Naive thymus-derived CD4-positive, alpha-beta T cell (primary cell): ENCODE measurements at regions of chr6 and their contacts with region 1.

Region 1: GRCh38 chr6:142112451-142113061 is 20.2 kb upstream of the GJE1 start:
- DNase-seq: peak; percentile 10 to 45 (median 37)
- ATAC-seq: peak; percentile 61
- H3K4me3 ChIP-seq: no peak overlapping the region
- H3K4me3 Mint-ChIP-seq: no peak overlapping the region
- H3K27ac ChIP-seq: no peak overlapping the region
- H3K27ac Mint-ChIP-seq: no peak overlapping the region
- H3K4me1 ChIP-seq: no peaks in the 10 kb centered on the region
- H3K4me1 Mint-ChIP-seq: no peaks in the 10 kb centered on the region
- H3K27me3 ChIP-seq: no peaks in the 10 kb centered on the region
- H3K27me3 Mint-ChIP-seq: peaks cover 0 to 11% (median 6%) of the 10 kb centered on the region in 5 donors

Region 2: GRCh38 chr6:141309295-141309694 is 803.3 kb before region 1 on chr6:
- CTCF ChIA-PET with region 1: no interaction called
- POLR2A ChIA-PET with region 1: no interaction called
- intact Hi-C with region 1: loop called in 1 of 2 experiments (anchors 1 kb)
- DNase-seq: peak in 2 of 9 donors; percentile 4 to 15
- ATAC-seq: peak; percentile 62
- H3K4me3 ChIP-seq: no peak overlapping the region
- H3K4me3 Mint-ChIP-seq: no peak overlapping the region
- H3K27ac ChIP-seq: no peak overlapping the region
- H3K27ac Mint-ChIP-seq: no peak overlapping the region
- H3K4me1 ChIP-seq: no peaks in the 10 kb centered on the region
- H3K4me1 Mint-ChIP-seq: no peaks in the 10 kb centered on the region
- H3K27me3 ChIP-seq: no peaks in the 10 kb centered on the region
- H3K27me3 Mint-ChIP-seq: peaks cover 0 to 7% (median 0%) of the 10 kb centered on the region in 5 donors

Region 3: DNA sequence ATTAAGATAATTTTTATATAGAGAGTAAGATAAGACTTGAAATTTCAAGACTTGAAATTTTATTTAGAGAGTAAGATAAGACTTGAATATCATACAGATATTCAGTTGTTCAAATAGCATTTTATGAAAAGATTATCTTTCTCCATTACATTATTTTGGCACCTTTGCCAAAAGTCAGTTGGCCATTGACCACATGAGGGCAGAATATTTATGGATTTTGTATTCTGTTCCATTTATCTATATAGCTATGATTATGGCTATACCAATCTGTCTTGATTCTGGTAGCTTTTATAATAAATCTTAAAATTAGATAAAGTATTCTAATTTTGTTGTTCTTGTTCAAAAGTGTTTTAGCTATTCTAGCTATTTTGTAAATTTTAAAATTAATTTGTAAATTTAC is 517.7 kb before region 1 on chr6:
- CTCF ChIA-PET with region 1: no interaction called
- POLR2A ChIA-PET with region 1: no interaction called
- intact Hi-C with region 1: loop called in 1 of 2 experiments (anchors 1 kb)
- DNase-seq: no peak
- ATAC-seq: no peak
- H3K4me3 ChIP-seq: no peak overlapping the region
- H3K4me3 Mint-ChIP-seq: no peak overlapping the region
- H3K27ac ChIP-seq: no peak overlapping the region
- H3K27ac Mint-ChIP-seq: no peak overlapping the region
- H3K4me1 ChIP-seq: no peaks in the 10 kb centered on the region
- H3K4me1 Mint-ChIP-seq: no peaks in the 10 kb centered on the region
- H3K27me3 ChIP-seq: no peaks in the 10 kb centered on the region
- H3K27me3 Mint-ChIP-seq: peaks cover 0 to 18% (median 0%) of the 10 kb centered on the region in 5 donors

Region 4: GRCh38 chr6:141641406-141641805 is 471.1 kb before region 1 on chr6:
- CTCF ChIA-PET with region 1: no interaction called
- POLR2A ChIA-PET with region 1: no interaction called
- intact Hi-C with region 1: loop called in 1 of 2 experiments (anchors 1 kb)
- DNase-seq: no peak
- ATAC-seq: no peak
- H3K4me3 ChIP-seq: no peak overlapping the region
- H3K4me3 Mint-ChIP-seq: no peak overlapping the region
- H3K27ac ChIP-seq: no peak overlapping the region
- H3K27ac Mint-ChIP-seq: no peak overlapping the region
- H3K4me1 ChIP-seq: no peaks in the 10 kb centered on the region
- H3K4me1 Mint-ChIP-seq: no peaks in the 10 kb centered on the region
- H3K27me3 ChIP-seq: no peaks in the 10 kb centered on the region
- H3K27me3 Mint-ChIP-seq: peaks cover 0 to 4% (median 0%) of the 10 kb centered on the region in 5 donors

Region 5: GRCh38 chr6:141677598-141678211 is 434.9 kb before region 1 on chr6:
- CTCF ChIA-PET with region 1: interaction called, 3 read pairs
- POLR2A ChIA-PET with region 1: no interaction called
- intact Hi-C with region 1: loop called in 1 of 2 experiments (anchors 1 kb)
- DNase-seq: peak in 3 of 9 donors; percentile 1 to 8 (median 2)
- ATAC-seq: no peak
- H3K4me3 ChIP-seq: no peak overlapping the region
- H3K4me3 Mint-ChIP-seq: no peak overlapping the region
- H3K27ac ChIP-seq: no peak overlapping the region
- H3K27ac Mint-ChIP-seq: no peak overlapping the region
- H3K4me1 ChIP-seq: no peaks in the 10 kb centered on the region
- H3K4me1 Mint-ChIP-seq: peaks cover 0 to 1% (median 0%) of the 10 kb centered on the region in 7 donors
- H3K27me3 ChIP-seq: no peaks in the 10 kb centered on the region
- H3K27me3 Mint-ChIP-seq: peaks cover 0 to 7% (median 0%) of the 10 kb centered on the region in 5 donors

Region 6: GRCh38 chr6:141988954-141989705 is 123.4 kb before region 1 on chr6:
- CTCF ChIA-PET with region 1: interaction called, 3 read pairs
- POLR2A ChIA-PET with region 1: no interaction called
- intact Hi-C with region 1: loop called (anchors 1 kb)
- DNase-seq: peak in 6 of 9 donors; percentile 4 to 30 (median 13)
- ATAC-seq: peak; percentile 50
- H3K4me3 ChIP-seq: no peak overlapping the region
- H3K4me3 Mint-ChIP-seq: no peak overlapping the region
- H3K27ac ChIP-seq: no peak overlapping the region
- H3K27ac Mint-ChIP-seq: no peak overlapping the region
- H3K4me1 ChIP-seq: no peaks in the 10 kb centered on the region
- H3K4me1 Mint-ChIP-seq: no peaks in the 10 kb centered on the region
- H3K27me3 ChIP-seq: no peaks in the 10 kb centered on the region
- H3K27me3 Mint-ChIP-seq: peaks cover 0 to 20% (median 8%) of the 10 kb centered on the region in 5 donors